ENCODE measurements at regions of chr18 and their contacts with region 1.

Region 1: GRCh38 chr18:36809590-36810381 is 19.0 kb downstream of the TPGS2 start:
- DNase-seq: peak; percentile 66
- H3K4me3 ChIP-seq: no peak overlapping the region
- H3K27ac ChIP-seq: no peak overlapping the region
- H3K4me1 ChIP-seq: no peaks in the 10 kb centered on the region
- H3K27me3 ChIP-seq: no peaks in the 10 kb centered on the region
- CTCF ChIP-seq: peak; percentile 71 to 76
- POLR2A ChIP-seq: no peak

Region 2: DNA sequence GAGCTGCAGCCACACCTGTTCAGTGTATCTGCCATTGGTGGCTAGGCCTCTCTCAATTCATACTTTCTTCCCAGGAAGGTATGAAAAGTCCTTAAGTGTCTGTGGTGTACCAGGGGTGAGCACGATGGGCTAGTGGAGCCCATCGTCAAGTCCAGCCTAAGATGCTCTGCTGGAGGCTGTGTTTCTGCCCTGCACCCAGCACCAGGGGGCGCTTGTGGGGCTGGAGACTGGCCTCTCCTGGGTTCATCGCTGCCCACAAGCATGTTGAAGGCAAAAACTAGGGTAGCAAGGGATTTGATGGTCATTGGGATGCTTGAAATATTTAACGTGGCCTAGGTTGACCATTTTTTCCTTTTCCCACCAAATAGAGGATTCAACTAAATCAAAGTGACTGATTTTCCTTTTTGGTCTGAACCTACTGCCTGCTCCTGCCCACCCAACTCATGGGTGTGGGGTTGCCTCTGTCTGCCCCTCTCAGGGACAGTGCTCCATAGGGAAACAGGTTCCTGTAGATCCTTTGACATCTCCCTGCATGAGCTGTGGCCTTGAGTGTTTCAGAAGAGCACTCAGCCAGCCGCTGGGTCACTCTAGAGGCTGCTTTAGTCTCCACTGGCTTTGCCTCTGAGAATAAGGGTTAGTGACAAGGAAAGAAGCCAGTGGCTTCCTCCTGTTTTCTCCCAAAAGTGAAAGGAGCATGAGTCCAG is 40.0 kb before region 1 on chr18:
- CTCF ChIA-PET with region 1: no interaction called
- POLR2A ChIA-PET with region 1: no interaction called
- dilution Hi-C with region 1: no loop called
- intact Hi-C with region 1: loop called (anchors 1 kb)
- DNase-seq: no peak
- H3K4me3 ChIP-seq: no peak overlapping the region
- H3K27ac ChIP-seq: no peak overlapping the region
- H3K4me1 ChIP-seq: no peaks in the 10 kb centered on the region
- H3K27me3 ChIP-seq: peaks cover 7 to 9% of the 10 kb centered on the region in 2 experiments
- CTCF ChIP-seq: peak; percentile 42 to 58
- POLR2A ChIP-seq: no peak

Region 3: DNA sequence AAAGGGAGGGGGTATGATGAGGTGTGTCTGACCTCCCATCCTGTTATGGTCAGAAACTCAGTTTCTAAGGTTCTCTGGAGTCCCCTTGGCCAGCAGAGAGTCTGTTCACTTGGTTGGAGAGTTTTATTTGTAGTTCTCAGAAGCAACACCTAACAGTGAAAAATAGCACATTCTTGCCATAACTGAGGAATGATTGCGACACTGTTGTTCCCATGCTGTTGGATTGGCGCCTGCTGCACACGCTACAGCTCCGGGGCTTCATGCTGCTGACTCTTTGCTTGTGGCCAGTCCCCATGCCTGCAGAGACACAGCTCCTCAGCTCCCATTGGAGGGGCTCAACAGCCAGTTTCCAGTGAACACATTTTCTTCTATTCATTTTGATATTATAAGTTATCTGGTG is 23.1 kb before region 1 on chr18:
- CTCF ChIA-PET with region 1: no interaction called
- POLR2A ChIA-PET with region 1: no interaction called
- dilution Hi-C with region 1: no loop called
- intact Hi-C with region 1: no loop called
- DNase-seq: peak; percentile 6
- H3K4me3 ChIP-seq: no peak overlapping the region
- H3K27ac ChIP-seq: no peak overlapping the region
- H3K4me1 ChIP-seq: no peaks in the 10 kb centered on the region
- H3K27me3 ChIP-seq: no peaks in the 10 kb centered on the region
- CTCF ChIP-seq: no peak
- POLR2A ChIP-seq: no peak

Region 4: GRCh38 chr18:36798738-36799473 is 10.9 kb before region 1 on chr18:
- CTCF ChIA-PET with region 1: interaction called, 10 read pairs
- POLR2A ChIA-PET with region 1: no interaction called
- dilution Hi-C with region 1: no loop called
- intact Hi-C with region 1: no loop called
- DNase-seq: no peak
- H3K4me3 ChIP-seq: no peak overlapping the region
- H3K27ac ChIP-seq: no peak overlapping the region
- H3K4me1 ChIP-seq: no peaks in the 10 kb centered on the region
- H3K27me3 ChIP-seq: no peaks in the 10 kb centered on the region
- CTCF ChIP-seq: no peak
- POLR2A ChIP-seq: no peak

Region 5: GRCh38 chr18:36828630-36829361 is 19.0 kb after region 1 on chr18 and contains the starts of genes KIAA1328 and TPGS2:
- CTCF ChIA-PET with region 1: interaction called, 12 read pairs
- POLR2A ChIA-PET with region 1: no interaction called
- dilution Hi-C with region 1: no loop called
- intact Hi-C with region 1: no loop called
- DNase-seq: peak; percentile 91
- H3K4me3 ChIP-seq: peak within 1 kb of the TSS; percentile 72 to 97 (median 86)
- H3K27ac ChIP-seq: peak within 1 kb of the TSS; percentile 68
- H3K4me1 ChIP-seq: peaks cover 18% of the 10 kb centered on the region
- H3K27me3 ChIP-seq: no peaks in the 10 kb centered on the region
- CTCF ChIP-seq: peak; percentile 32 to 61
- POLR2A ChIP-seq: peak; percentile 9
- total RNA-seq, gene KIAA1328: 6.3 and 6.5 TPM in 2 replicates
- total RNA-seq, gene TPGS2: 148 and 150 TPM in 2 replicates

Region 6: DNA sequence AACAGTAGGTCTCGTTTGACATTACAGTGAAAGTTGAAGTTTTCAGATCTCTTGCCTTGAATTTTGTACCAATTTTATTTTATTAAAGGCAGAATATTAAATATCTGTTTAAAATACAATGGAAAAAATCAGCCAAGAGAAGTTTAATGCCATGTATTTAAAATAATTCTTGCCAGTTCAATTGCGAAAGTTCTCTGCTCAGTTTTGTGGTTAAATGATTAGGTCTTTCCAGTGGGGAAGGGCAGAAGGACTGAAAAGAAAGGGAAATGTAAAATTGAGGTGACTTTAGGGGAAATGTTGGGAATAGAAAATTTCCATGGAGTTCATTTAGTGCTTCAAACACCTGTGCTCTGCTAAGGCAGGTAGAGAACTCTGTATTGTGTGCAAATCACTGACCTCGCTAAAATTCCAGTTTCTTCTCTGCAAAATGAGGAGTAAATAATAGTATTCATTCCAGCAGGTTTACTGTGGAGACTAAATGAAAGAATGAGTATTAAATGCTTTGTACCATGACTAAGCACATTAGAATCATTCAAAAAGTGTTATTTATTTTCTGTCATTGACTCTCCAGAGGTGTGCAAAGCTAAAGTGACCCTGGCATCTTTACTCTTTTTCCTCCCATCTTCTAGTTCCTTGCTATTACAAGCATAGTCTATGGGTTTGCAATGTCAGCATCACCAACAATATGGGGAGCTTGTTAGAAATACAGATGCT is 93.6 kb after region 1 on chr18:
- CTCF ChIA-PET with region 1: no interaction called
- POLR2A ChIA-PET with region 1: no interaction called
- dilution Hi-C with region 1: no loop called
- intact Hi-C with region 1: no loop called
- DNase-seq: no peak
- H3K4me3 ChIP-seq: no peak overlapping the region
- H3K27ac ChIP-seq: no peak overlapping the region
- H3K4me1 ChIP-seq: peaks cover 7% of the 10 kb centered on the region
- H3K27me3 ChIP-seq: no peaks in the 10 kb centered on the region
- CTCF ChIP-seq: no peak
- POLR2A ChIP-seq: no peak

Measured in endothelial cell of umbilical vein (primary cell).